ENCODE measurements at regions of chr17 and their contacts with region 1.

Region 1: GRCh38 chr17:49997791-49998703 is 3.0 kb upstream of the DLX3 start:
- DNase-seq: peak; percentile 90
- CTCF ChIP-seq: peak; percentile 85

Region 2: DNA sequence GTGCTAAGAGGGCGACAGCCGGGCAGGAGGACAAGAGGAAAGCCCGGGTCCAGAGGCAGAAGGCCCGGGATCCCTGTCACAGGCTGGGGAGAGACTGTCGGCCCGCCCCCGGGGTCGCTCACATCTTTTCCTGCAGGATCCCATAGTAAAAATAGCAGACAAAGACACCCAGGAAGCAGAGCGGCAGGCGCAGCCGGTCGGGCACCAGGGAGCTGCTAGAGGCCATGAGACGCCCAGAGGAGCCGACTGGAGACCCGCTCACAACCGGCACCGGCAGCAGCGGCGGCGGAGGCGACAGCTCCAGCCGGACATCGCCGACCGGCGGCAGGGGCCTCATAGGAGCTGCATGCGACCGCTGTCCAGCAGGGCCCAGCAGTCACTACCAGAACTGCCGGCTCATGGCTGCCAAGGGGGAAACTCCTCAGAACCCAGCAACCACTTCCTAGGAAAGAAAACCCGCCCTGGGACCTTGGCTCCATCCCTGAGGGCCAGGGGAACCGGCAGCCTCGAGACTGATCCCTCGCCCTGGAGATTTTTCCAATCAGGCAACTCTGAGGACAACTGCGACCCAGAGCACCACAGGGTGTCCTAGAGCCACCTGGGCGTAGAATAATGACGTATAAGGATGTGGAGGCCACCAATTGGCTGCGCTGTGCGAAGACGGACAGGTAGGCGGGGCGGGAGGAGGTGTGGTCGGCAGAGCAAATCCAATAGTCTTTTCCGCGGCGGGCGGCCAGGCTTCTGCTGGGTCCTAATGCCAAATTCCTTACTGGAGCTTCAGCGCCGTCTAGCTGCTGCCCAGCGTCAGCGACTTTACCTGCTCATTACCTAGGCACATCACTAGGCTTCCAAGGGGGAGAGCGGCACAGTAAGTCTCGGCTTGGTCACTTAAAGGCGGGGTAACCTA is 290.2 kb before region 1 on chr17 and contains the start of gene SLC35B1:
- CTCF ChIA-PET with region 1: interaction called, 10 read pairs
- POLR2A ChIA-PET with region 1: no interaction called
- DNase-seq: peak; percentile 99
- CTCF ChIP-seq: peak; percentile 94

Region 3: DNA sequence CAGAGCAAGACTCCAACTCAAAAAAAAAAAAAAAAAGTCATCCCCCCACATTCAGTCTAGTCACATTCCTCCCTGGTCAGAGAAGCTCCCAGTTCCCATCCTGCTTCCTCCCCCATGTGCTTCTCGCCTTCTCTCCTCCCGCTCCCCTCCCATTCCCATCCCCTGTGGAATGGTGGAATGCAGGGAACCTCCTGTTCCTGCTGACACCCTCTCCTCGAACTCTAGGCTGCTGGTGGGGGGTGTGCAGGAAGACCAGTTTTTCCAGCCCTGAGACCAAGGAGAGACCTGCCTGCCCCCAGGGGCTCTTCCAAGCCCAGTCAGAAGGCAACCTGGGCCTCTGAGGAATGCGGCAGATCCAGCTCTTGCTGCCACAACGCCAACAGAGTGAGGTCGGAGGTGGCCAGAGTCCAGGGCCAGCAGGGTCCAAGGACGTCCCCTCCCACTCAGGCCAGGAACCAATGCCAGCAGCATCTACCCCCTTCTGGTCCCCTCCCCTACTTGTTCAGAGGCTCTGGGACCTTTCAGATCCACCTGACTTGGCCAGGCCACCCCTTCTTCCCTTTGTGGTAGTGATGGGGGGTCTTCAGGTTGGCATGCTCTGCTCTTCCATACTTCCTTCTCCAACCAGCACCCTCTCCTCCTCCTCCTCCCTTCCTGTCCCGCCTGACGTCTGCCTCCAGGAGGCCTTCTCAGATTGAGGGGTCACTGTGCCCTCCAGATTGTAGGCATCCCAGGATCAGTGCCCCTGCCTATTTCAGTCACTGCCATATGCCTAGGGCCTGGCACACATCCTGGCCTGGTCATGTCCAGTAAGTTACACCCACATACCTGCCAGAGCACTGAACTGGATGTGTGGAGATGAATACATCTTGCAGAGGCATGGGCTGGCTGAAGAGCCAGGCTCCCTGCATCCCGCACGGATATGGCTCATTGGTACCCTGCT is 110.7 kb before region 1 on chr17:
- CTCF ChIA-PET with region 1: interaction called, 13 read pairs
- POLR2A ChIA-PET with region 1: no interaction called
- DNase-seq: no peak
- CTCF ChIP-seq: no peak

Region 4: GRCh38 chr17:49963626-49964302 is 34.3 kb before region 1 on chr17:
- CTCF ChIA-PET with region 1: interaction called, 12 read pairs
- POLR2A ChIA-PET with region 1: no interaction called
- DNase-seq: no peak
- CTCF ChIP-seq: no peak

Region 5: GRCh38 chr17:50015146-50015545 is 17.1 kb after region 1 on chr17:
- CTCF ChIA-PET with region 1: interaction called, 21 read pairs
- POLR2A ChIA-PET with region 1: no interaction called
- DNase-seq: no peak
- CTCF ChIP-seq: no peak

Region 6: DNA sequence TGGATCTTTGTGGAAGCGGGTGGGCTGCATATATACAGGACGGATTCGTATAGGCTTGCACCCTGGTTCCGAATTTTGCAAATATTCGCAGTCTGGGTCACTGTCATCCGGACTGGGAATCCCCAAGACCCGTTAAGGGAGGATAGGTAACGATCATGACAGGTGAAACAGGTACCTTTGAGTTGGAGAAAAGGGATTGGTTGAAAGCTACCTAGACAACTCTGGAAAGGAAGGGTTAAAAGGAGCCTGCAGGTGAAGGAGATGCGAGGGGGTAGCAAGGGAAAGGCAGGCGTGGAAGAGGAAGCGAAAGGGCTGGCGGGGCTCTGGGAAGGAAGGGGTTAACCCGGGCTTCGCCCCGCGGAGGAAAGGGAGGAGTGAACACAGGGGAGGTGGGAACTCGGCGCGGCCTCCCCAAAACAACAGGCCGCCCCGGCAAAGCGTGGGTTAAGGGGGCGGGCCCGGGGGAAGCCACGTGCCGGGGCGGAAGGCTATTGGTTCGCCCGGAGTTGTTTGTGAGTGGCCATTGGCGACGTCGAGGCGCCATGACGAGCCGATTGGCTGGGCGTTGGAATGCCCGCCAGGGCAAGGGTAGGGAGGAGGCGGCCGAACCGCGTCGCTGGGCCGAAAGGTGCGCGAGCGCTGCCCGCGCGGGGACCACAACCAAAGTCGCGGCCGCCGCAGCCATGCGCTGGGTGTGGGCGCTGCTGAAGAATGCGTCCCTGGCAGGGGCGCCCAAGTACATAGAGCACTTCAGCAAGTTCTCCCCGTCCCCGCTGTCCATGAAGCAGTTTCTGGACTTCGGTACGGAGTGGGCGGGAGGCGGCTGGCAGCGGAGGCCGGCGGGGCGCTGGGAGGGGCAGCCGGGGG is 96.9 kb after region 1 on chr17 and contains the start of gene PDK2:
- CTCF ChIA-PET with region 1: interaction called, 30 read pairs
- POLR2A ChIA-PET with region 1: no interaction called
- DNase-seq: peak; percentile 98
- CTCF ChIP-seq: no peak

Region 7: DNA sequence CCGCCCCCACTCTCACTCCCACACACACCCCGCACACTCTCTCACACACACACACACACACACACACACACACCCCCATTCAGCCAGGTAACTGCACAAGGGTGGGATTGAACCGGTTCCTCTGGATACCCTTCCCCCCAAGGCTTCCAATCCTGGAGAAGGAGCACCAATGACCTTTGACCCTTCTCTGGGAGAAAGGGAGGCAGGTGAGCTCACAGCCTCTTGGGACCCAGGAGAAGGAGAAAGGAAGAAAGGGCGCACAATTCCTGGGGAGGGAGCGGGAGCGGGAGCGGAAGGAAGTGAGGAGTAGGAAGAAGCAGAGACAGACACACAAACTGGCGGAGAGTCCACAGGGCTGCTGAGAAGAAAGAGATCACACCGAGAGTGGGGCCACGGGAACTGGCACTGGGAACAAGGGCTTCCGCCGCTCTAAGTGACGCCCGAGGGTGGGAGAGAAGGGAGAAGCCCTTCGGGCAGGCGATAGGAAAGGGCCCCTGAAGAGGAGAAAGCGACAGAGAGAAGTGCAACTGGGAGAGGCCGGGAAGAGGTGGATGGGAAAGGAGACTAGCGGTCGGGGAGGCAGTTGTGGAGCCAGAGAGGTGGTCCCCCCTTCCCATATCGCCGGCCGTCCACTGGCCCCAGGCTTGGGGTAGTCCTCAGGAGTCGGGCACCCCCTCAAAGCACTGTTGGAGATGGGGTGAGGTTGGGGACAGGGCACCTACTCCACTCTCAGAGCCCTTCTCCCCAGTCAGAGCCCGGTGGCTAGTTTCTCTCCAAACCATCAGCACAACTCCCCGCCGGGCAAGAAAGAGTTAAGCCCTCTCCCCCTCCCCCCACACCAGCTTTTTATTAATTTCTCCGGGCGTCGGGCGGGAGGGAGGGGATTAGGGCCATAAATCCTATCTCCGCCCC is 130.7 kb after region 1 on chr17:
- CTCF ChIA-PET with region 1: no interaction called
- POLR2A ChIA-PET with region 1: no interaction called
- DNase-seq: no peak
- CTCF ChIP-seq: no peak